Activated T-helper 2 cell treated with anti-CD3 and anti-CD28 coated beads, Interferon-gamma antibody, Interleukin-2, Interleukin-4, amounts not matched to agents 10 μg/mL and 5 μg/mL and 100 μg/mL, durations not matched to agents 14 hours and 24 hours and 36 hours (primary cell): ENCODE measurements at regions of chr14 and their contacts with region 1.

Region 1: GRCh38 chr14:58571769-58572472 is 65.8 kb upstream of the DACT1 start:
- DNase-seq: peak; percentile 26
- H3K4me3 Mint-ChIP-seq: peak overlapping the region; percentile 44
- H3K27ac Mint-ChIP-seq: peak overlapping the region; percentile 84
- H3K4me1 Mint-ChIP-seq: peaks cover 22% of the 10 kb centered on the region
- H3K27me3 Mint-ChIP-seq: no peaks in the 10 kb centered on the region

Region 2: GRCh38 chr14:58501214-58501816 is 70.6 kb before region 1 on chr14:
- intact Hi-C with region 1: loop called (anchors 5 kb)
- DNase-seq: no peak
- H3K4me3 Mint-ChIP-seq: no peak overlapping the region
- H3K27ac Mint-ChIP-seq: no peak overlapping the region
- H3K4me1 Mint-ChIP-seq: no peaks in the 10 kb centered on the region
- H3K27me3 Mint-ChIP-seq: no peaks in the 10 kb centered on the region

Region 3: DNA sequence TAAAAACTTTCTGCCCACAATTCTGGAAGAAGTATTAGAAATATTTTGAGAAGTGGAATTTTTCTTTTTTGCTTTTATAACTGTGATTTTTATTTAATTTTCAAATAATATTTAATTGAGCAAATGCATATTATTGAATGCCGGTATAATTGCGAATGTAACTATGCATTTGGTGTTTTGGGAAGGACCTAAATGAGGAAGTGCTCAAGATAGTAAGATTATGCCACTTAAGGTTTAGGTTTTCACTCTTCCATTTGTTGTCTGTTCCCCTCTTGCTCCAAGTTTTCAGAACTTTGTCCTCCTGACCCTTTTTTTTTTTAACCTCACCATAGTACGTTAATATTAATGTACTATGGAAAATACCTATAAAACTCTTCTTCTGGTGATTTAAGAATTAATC is 58.6 kb before region 1 on chr14:
- intact Hi-C with region 1: no loop called
- DNase-seq: no peak
- H3K4me3 Mint-ChIP-seq: no peak overlapping the region
- H3K27ac Mint-ChIP-seq: no peak overlapping the region
- H3K4me1 Mint-ChIP-seq: peaks cover 1% of the 10 kb centered on the region
- H3K27me3 Mint-ChIP-seq: no peaks in the 10 kb centered on the region

Region 4: GRCh38 chr14:58598028-58598803 is 26.3 kb after region 1 on chr14:
- intact Hi-C with region 1: loop called (anchors 1 kb)
- DNase-seq: peak; percentile 19
- H3K4me3 Mint-ChIP-seq: peak overlapping the region; percentile 8
- H3K27ac Mint-ChIP-seq: peak overlapping the region; percentile 0
- H3K4me1 Mint-ChIP-seq: peaks cover 31% of the 10 kb centered on the region
- H3K27me3 Mint-ChIP-seq: no peaks in the 10 kb centered on the region

Region 5: GRCh38 chr14:58731465-58732330 is 159.8 kb after region 1 on chr14:
- intact Hi-C with region 1: loop called (anchors 5 kb)
- DNase-seq: no peak
- H3K4me3 Mint-ChIP-seq: no peak overlapping the region
- H3K27ac Mint-ChIP-seq: no peak overlapping the region
- H3K4me1 Mint-ChIP-seq: peaks cover 26% of the 10 kb centered on the region
- H3K27me3 Mint-ChIP-seq: no peaks in the 10 kb centered on the region